B cell (primary cell): ENCODE measurements at regions of chr3 and their contacts with region 1.

Region 1: GRCh38 chr3:63297631-63298030 is 19.5 kb downstream of the SYNPR start:
- DNase-seq: no peak
- ATAC-seq: no peak
- H3K4me3 ChIP-seq: no peak overlapping the region
- H3K4me3 Mint-ChIP-seq: no peak overlapping the region
- H3K27ac ChIP-seq: no peak overlapping the region
- H3K27ac Mint-ChIP-seq: no peak overlapping the region
- H3K4me1 ChIP-seq: no peaks in the 10 kb centered on the region
- H3K4me1 Mint-ChIP-seq: no peaks in the 10 kb centered on the region
- H3K27me3 ChIP-seq: no peaks in the 10 kb centered on the region
- H3K27me3 Mint-ChIP-seq: no peaks in the 10 kb centered on the region
- CTCF ChIP-seq: no peak

Region 2: GRCh38 chr3:63328365-63328764 is 30.7 kb after region 1 on chr3:
- CTCF ChIA-PET with region 1: no interaction called
- POLR2A ChIA-PET with region 1: no interaction called
- intact Hi-C with region 1: loop called (anchors 2 kb)
- DNase-seq: no peak
- ATAC-seq: no peak
- H3K4me3 ChIP-seq: no peak overlapping the region
- H3K4me3 Mint-ChIP-seq: no peak overlapping the region
- H3K27ac ChIP-seq: no peak overlapping the region
- H3K27ac Mint-ChIP-seq: no peak overlapping the region
- H3K4me1 ChIP-seq: no peaks in the 10 kb centered on the region
- H3K4me1 Mint-ChIP-seq: no peaks in the 10 kb centered on the region
- H3K27me3 ChIP-seq: no peaks in the 10 kb centered on the region
- H3K27me3 Mint-ChIP-seq: peaks cover 5% of the 10 kb centered on the region
- CTCF ChIP-seq: no peak

Region 3: DNA sequence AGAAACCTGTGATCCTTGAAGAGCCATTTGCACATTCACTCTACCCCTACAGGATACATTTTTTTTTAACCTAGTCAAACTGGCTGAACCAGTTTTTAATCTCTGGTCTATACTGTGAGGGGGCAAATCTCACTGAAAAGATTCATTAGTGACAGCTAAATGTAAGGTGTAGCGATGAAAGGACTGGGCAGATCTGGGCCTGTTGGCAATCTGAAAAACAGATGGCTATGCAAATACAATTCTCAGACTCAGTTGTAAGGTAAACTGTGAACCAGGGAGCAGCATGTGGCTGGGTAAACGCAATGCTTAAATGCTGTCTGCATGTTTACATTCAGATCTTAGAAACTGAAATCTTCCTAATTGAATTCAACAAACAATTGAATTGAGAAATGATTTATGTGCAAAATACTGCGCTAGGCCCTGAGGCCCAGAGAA is 279.3 kb after region 1 on chr3:
- CTCF ChIA-PET with region 1: no interaction called
- POLR2A ChIA-PET with region 1: no interaction called
- intact Hi-C with region 1: no loop called
- DNase-seq: no peak
- ATAC-seq: no peak
- H3K4me3 ChIP-seq: no peak overlapping the region
- H3K4me3 Mint-ChIP-seq: no peak overlapping the region
- H3K27ac ChIP-seq: no peak overlapping the region
- H3K27ac Mint-ChIP-seq: no peak overlapping the region
- H3K4me1 ChIP-seq: no peaks in the 10 kb centered on the region
- H3K4me1 Mint-ChIP-seq: no peaks in the 10 kb centered on the region
- H3K27me3 ChIP-seq: no peaks in the 10 kb centered on the region
- H3K27me3 Mint-ChIP-seq: peaks cover 3% of the 10 kb centered on the region
- CTCF ChIP-seq: no peak